CD4-positive, alpha-beta memory T cell (primary cell): ENCODE measurements at regions of chr20 and their contacts with region 1.

Region 1: GRCh38 chr20:57432874-57433491 is 41.8 kb downstream of the RBM38 start:
- DNase-seq: peak; percentile 72 to 81 (median 77)
- H3K4me3 ChIP-seq: peak overlapping the region in 1 of 2 donors; percentile 44
- H3K4me3 Mint-ChIP-seq: peak overlapping the region; percentile 71 to 89 (median 78)
- H3K27ac ChIP-seq: peak overlapping the region; percentile 43
- H3K27ac Mint-ChIP-seq: peak overlapping the region; percentile 83 to 95 (median 92)
- H3K4me1 ChIP-seq: peaks cover 65% of the 10 kb centered on the region
- H3K4me1 Mint-ChIP-seq: peaks cover 39 to 70% (median 61%) of the 10 kb centered on the region in 4 donors
- H3K27me3 ChIP-seq: no peaks in the 10 kb centered on the region
- H3K27me3 Mint-ChIP-seq: no peaks in the 10 kb centered on the region

Region 2: GRCh38 chr20:57414867-57415592 is 18.0 kb before region 1 on chr20:
- CTCF ChIA-PET with region 1: interaction called, 6 read pairs
- POLR2A ChIA-PET with region 1: interaction called, 6 read pairs
- intact Hi-C with region 1: loop called (anchors 2 kb)
- DNase-seq: no peak
- H3K4me3 ChIP-seq: no peak overlapping the region
- H3K4me3 Mint-ChIP-seq: no peak overlapping the region
- H3K27ac ChIP-seq: no peak overlapping the region
- H3K27ac Mint-ChIP-seq: peak overlapping the region in 1 of 7 donors; percentile 50
- H3K4me1 ChIP-seq: peaks cover 20% of the 10 kb centered on the region
- H3K4me1 Mint-ChIP-seq: peaks cover 10 to 19% (median 14%) of the 10 kb centered on the region in 4 donors
- H3K27me3 ChIP-seq: no peaks in the 10 kb centered on the region
- H3K27me3 Mint-ChIP-seq: no peaks in the 10 kb centered on the region